Activated CD8-positive, alpha-beta T cell treated with anti-CD3 and anti-CD28 coated beads, Interleukin-2, amount 10 ng/mL, durations not matched to agents 7 days and 5 days (primary cell): ENCODE measurements at regions of chr14 and their contacts with region 1.

Region 1: GRCh38 chr14:20454516-20455354 is at the starts of genes APEX1 and OSGEP:
- DNase-seq: peak; percentile 99
- ATAC-seq: peak; percentile 90
- H3K4me3 Mint-ChIP-seq: peak within 1 kb of the TSS; percentile 36
- H3K27ac Mint-ChIP-seq: no peak within 1 kb of the TSS
- H3K4me1 Mint-ChIP-seq: peaks cover 24% of the 10 kb centered on the region
- H3K27me3 Mint-ChIP-seq: no peaks in the 10 kb centered on the region
- total RNA-seq, gene APEX1: 135 to 142 TPM
- total RNA-seq, gene OSGEP: 51.8 to 56.6 TPM

Region 2: DNA sequence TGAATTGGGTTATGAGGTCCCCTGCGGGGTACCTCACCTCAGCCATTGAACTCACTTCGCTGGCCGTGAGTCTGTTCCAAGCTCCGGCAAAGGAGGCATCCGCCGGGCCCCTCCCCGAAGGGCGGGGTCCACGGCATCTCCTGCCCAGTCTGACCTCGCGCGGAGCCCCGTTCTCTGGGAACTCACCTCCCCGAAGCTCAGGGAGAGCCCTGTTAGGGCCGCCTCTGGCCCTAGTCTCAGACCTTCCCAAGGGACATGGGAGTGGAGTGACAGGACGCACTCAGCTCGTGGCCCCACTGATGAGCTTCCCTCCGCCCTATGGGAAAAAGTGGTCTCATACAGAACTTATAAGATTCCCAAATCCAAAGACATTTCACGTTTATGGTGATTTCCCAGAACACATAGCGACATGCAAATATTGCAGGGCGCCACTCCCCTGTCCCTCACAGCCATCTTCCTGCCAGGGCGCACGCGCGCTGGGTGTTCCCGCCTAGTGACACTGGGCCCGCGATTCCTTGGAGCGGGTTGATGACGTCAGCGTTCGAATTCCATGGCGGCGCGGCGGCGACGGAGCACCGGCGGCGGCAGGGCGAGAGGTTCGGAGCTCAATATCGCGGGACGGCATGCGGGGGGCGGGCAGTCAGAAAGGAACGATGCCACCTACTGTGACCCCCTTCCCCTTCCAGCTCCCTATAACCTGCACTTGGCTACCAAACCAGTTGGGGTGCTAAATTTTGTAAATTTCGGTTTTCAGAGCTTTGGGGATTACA is 111.5 kb before region 1 on chr14 and contains the start of gene PARP2:
- CTCF ChIA-PET with region 1: no interaction called
- POLR2A ChIA-PET with region 1: interaction called, 14 read pairs
- DNase-seq: peak; percentile 95
- ATAC-seq: peak; percentile 94
- H3K4me3 Mint-ChIP-seq: peak within 1 kb of the TSS; percentile 93
- H3K27ac Mint-ChIP-seq: peak within 1 kb of the TSS; percentile 98
- H3K4me1 Mint-ChIP-seq: peaks cover 20% of the 10 kb centered on the region
- H3K27me3 Mint-ChIP-seq: peaks cover 5% of the 10 kb centered on the region
- total RNA-seq, gene PARP2: 29.7 to 32.3 TPM

Region 3: DNA sequence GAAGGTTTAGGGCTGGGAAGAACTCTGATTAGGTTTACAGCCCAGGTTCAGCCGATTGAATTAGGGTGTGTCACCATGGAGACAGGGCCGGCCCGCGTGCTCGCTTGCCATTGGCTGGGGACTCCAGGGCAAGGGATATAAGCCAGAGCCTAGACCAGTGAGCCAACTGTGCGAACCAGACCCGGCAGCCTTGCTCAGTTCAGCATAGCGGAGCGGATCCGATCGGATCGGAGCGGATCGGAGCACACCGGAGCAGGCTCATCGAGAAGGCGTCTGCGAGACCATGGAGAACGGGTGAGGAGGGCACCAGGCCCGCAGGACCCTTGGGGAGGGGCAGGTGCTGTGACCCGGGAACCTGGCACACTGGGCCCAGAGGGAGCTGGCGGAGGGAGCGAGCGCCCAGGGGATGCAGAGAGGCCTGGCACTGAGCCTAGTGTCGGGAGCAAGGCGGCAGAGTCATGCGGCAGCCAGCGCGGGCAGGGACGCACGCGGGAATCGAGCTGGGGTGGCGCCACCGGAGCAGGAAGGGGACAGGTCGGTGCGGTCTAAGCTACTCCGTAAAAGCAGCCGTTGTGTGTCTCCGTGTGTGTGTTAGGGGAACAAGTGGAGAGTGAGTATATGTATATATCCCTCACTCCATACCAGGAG is 14.6 kb after region 1 on chr14 and contains the start of gene PNP:
- CTCF ChIA-PET with region 1: interaction called, 3 read pairs
- POLR2A ChIA-PET with region 1: interaction called, 32 read pairs
- DNase-seq: peak; percentile 93
- ATAC-seq: peak; percentile 93
- H3K4me3 Mint-ChIP-seq: peak within 1 kb of the TSS; percentile 87
- H3K27ac Mint-ChIP-seq: peak within 1 kb of the TSS; percentile 94
- H3K4me1 Mint-ChIP-seq: peaks cover 35% of the 10 kb centered on the region
- H3K27me3 Mint-ChIP-seq: no peaks in the 10 kb centered on the region
- total RNA-seq, gene PNP: 211 to 216 TPM

Region 4: DNA sequence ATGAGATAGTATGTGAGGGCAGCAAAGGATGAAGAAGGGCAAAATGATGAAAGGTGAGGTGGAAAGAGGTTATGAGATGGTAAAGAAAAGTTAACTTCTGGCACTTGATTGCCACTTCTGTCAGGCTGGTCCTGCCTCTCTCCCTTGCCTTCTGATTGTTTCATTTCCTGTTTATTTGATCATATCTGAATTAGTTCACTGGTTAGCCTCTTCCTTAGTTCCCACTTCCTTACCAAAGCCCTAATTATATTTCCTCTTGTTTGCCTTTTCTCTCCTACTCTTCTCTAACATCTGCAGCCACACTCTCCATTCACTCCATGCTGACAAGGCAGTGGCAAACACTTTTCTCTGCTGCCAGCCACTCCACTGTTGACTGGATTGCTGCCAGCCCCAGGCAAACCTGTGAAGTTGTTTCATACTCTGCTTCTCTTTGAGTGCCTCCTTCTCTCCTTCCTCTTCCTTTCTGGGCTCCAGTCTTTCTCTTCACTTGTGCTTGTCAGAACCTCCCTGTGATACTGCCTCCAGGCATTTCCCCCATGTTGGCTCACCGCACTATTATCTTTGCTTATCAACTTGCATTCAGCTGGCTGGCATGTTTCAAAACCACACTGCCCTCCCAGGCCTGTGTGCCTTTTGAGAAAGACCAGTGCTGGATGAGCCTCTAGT is 22.6 kb after region 1 on chr14:
- CTCF ChIA-PET with region 1: interaction called, 4 read pairs
- POLR2A ChIA-PET with region 1: interaction called, 12 read pairs
- DNase-seq: peak; percentile 50
- ATAC-seq: peak; percentile 48
- H3K4me3 Mint-ChIP-seq: peak overlapping the region; percentile 44
- H3K27ac Mint-ChIP-seq: peak overlapping the region; percentile 89
- H3K4me1 Mint-ChIP-seq: peaks cover 57% of the 10 kb centered on the region
- H3K27me3 Mint-ChIP-seq: no peaks in the 10 kb centered on the region

Region 5: DNA sequence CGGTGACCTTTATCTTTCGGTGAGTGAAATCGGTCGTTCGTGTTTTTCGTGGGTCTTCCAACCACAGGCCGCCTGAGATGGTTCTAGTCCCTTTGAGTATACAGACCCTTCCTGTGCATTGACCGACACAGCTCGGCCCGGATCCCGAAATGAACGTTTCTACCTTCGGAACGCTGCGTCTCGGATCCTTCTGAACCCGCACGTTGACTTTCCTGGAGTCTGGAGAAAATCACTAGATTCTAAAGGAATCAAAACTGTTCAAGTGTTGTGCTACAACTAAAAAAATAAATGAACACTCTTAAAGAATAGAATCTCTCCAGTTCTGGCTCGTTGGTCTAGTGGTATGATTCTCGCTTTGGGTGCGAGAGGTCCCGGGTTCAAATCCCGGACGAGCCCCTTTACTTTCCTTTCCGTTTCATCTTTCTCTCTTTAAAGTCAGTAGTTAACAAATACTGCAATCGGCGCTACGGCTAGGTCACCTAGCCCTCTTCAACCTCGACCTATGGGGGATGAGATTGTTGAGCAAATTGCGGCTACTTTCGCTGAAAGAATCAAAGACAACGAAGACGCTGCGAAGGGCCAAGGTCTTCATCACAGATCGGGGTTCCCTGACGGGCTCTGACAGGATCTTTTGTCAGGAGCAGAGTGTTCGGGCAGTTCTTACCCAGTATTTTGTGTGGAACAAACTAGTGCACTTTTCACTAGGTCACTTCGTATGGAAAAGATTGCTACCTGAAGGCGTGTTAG is 178.1 kb after region 1 on chr14:
- CTCF ChIA-PET with region 1: no interaction called
- POLR2A ChIA-PET with region 1: no interaction called
- DNase-seq: peak; percentile 85
- ATAC-seq: peak; percentile 86
- H3K4me3 Mint-ChIP-seq: peak overlapping the region; percentile 72
- H3K27ac Mint-ChIP-seq: peak overlapping the region; percentile 79
- H3K4me1 Mint-ChIP-seq: peaks cover 37% of the 10 kb centered on the region
- H3K27me3 Mint-ChIP-seq: peaks cover 65% of the 10 kb centered on the region